Dorsolateral prefrontal cortex (tissue), 120 donors: ENCODE measurements at regions of chr19 and their contacts with region 1.

Region 1: GRCh38 chr19:42244347-42245220 is 2.2 kb upstream of the GSK3A start:
- DNase-seq: peak; percentile 89 to 96 (median 92)
- H3K4me3 ChIP-seq: peak overlapping the region; percentile 49 to 98 (median 88)
- H3K27ac ChIP-seq: peak overlapping the region; percentile 72 to 100 (median 97)
- H3K27me3 ChIP-seq: no peaks in the 10 kb centered on the region
- CTCF ChIP-seq: peak; percentile 64 to 95 (median 88)

Region 2: DNA sequence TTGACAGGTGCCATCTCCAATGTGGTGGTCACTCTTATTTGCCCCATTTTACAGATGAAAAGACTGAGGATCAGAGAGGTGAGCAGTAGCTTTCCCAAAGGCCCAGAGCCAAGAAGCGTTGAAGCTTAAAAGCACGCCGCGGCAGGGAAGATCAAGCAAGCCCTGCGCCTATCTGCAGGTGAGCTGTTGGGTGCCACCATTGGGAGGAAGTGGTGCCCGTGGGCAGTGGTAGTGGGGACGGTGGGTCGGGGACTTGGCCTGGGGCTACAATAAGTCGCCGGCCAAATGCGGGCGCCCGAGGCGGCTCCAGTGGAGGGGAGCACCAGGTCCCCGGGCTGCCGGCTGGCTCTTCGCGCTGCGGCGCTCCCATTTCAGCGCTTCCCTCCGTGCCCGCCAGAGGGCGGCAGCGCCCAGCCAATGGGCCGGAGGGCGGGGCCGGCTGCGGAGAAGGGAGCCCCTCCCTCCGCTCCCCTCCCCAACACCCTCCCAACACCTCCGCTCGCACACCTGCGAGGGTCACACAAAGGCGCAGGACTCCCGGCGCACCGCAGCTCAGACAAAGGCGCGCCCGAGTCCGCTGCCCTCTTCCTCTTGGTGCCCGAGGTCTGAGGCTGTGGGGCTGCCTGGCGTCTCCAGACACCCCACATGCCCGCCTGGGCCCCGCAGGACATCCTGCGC is 111.6 kb before region 1 on chr19:
- intact Hi-C with region 1: loop called in 1 of 2 experiments (anchors 5 kb)
- DNase-seq: peak in 9 of 10 donors; percentile 53 to 89 (median 65)
- H3K4me3 ChIP-seq: peak overlapping the region; percentile 23 to 67 (median 48)
- H3K27ac ChIP-seq: peak overlapping the region in 13 of 59 donors; percentile 5 to 63 (median 27)
- H3K27me3 ChIP-seq: peaks cover 0 to 21% (median 5%) of the 10 kb centered on the region in 45 donors
- CTCF ChIP-seq: peak; percentile 74 to 99 (median 98)

Region 3: GRCh38 chr19:42219812-42220750 is 24.5 kb before region 1 on chr19 and contains the start of gene ZNF526:
- intact Hi-C with region 1: loop called in 1 of 2 experiments (anchors 2 kb)
- DNase-seq: peak; percentile 95 to 99 (median 97)
- H3K4me3 ChIP-seq: peak within 1 kb of the TSS; percentile 63 to 100 (median 91)
- H3K27ac ChIP-seq: peak within 1 kb of the TSS in 57 of 59 donors; percentile 36 to 100 (median 85)
- H3K27me3 ChIP-seq: no peaks in the 10 kb centered on the region
- CTCF ChIP-seq: peak in 26 of 56 donors; percentile 4 to 52 (median 20)
- total RNA-seq, gene ZNF526: 5.3 to 12.0 (median 7.5) TPM

Region 4: GRCh38 chr19:42295831-42296525 is 51.4 kb after region 1 on chr19:
- intact Hi-C with region 1: loop called in 1 of 2 experiments (anchors 5 kb)
- DNase-seq: peak; percentile 79 to 90 (median 84)
- H3K4me3 ChIP-seq: no peak overlapping the region
- H3K27ac ChIP-seq: peak overlapping the region in 23 of 59 donors; percentile 3 to 68 (median 36)
- H3K27me3 ChIP-seq: no peaks in the 10 kb centered on the region
- CTCF ChIP-seq: peak; percentile 53 to 99 (median 92)

Region 5: DNA sequence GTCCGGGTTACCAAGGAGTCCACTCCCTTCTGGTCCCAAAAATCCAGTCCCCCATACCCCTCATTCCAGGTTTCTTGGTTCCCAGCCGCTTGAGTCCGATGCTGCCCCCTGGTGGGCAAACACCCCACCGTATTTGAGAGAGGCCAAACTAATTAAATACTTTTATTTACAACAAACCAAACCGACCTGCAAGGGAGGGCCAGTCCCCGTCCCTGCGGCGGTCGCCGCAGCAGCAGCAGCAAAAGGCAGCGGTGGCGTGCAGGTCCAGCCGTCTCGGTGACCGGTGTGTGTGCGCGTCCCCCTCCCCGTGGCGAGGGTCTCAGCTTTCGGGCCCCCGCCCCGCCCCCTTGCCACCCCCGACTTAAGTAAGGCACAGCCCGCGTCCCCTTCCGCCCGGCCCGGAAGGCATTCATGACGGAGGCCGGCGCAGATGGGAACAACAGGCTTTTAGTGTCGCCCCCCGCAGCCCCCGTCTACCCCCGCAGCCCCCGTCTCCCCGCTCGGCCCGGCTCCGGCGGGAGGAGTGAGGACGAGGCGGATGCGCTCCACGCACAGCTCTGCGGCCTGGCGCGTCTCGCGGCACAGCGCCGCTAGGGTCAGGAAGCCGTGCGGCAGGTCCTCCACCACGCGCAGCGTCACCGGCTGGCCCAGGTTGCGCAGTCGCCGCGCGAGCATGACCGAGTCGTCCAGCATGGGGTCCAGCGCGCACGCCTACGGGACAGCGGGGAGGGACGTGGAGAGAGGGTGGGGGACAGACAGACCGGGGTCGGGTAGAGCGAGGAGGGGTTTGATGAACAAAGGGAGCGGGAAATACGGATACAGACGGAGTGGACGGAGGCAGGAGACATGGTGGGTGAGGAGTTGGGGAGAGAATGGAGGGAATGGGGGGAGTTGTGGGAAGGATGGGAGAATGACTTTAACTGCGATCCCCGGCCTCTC is 157.1 kb after region 1 on chr19:
- intact Hi-C with region 1: loop called in 1 of 2 experiments (anchors 5 kb)
- DNase-seq: peak; percentile 76 to 89 (median 80)
- H3K4me3 ChIP-seq: peak overlapping the region; percentile 22 to 79 (median 63)
- H3K27ac ChIP-seq: peak overlapping the region in 58 of 59 donors; percentile 17 to 90 (median 81)
- H3K27me3 ChIP-seq: no peaks in the 10 kb centered on the region
- CTCF ChIP-seq: peak; percentile 57 to 93 (median 80)

Region 6: GRCh38 chr19:42529248-42529764 is 284.7 kb after region 1 on chr19:
- intact Hi-C with region 1: no loop called
- DNase-seq: peak in 9 of 10 donors; percentile 7 to 79 (median 65)
- H3K4me3 ChIP-seq: no peak overlapping the region
- H3K27ac ChIP-seq: peak overlapping the region in 4 of 59 donors; percentile 26 to 69 (median 48)
- H3K27me3 ChIP-seq: no peaks in the 10 kb centered on the region
- CTCF ChIP-seq: peak; percentile 51 to 98 (median 89)